Endothelial cell of umbilical vein (primary cell): ENCODE measurements at regions of chr11 and their contacts with region 1.

Region 1: DNA sequence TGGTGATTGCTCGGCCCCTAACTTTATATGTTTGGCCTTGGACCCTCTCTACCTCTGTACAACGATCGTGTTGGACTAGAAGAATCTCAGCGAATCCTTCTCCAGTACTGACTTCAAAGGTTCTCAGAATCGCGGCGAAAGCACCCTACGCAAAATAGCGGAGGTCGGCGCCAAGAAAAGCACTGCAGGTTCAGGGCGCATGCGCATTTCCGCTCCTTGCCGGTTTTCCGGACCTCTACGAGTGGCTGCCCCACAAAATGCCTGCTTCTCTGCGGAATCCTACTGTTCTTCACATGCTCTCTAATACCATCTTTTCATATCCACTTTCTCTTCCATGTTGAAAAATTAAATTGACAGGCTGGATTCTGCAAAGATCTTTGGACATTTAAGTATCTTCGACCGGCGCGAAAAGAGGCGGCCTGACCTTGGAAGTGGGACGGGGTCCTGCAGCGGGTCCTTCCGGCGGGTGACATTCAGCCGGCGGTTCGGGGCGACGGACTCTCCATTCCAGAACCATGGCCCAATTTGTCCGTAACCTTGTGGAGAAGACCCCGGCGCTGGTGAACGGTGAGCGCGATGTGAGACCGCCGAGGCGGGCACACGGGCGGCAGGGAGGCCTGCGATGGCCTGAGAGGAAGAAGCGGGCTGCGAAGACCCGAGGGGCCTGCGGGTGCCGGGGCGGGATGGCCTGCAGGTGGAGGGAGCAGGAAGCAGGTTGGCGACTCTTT is at the start of gene ATP5MG:
- DNase-seq: peak; percentile 97
- H3K4me3 ChIP-seq: peak within 1 kb of the TSS; percentile 71 to 99 (median 94)
- H3K27ac ChIP-seq: peak within 1 kb of the TSS; percentile 63
- H3K4me1 ChIP-seq: peaks cover 10% of the 10 kb centered on the region
- H3K27me3 ChIP-seq: no peaks in the 10 kb centered on the region
- CTCF ChIP-seq: peak in 1 of 2 donors; percentile 15
- POLR2A ChIP-seq: peak; percentile 69
- total RNA-seq, gene ATP5MG: 211 and 242 TPM in 2 replicates

Region 2: DNA sequence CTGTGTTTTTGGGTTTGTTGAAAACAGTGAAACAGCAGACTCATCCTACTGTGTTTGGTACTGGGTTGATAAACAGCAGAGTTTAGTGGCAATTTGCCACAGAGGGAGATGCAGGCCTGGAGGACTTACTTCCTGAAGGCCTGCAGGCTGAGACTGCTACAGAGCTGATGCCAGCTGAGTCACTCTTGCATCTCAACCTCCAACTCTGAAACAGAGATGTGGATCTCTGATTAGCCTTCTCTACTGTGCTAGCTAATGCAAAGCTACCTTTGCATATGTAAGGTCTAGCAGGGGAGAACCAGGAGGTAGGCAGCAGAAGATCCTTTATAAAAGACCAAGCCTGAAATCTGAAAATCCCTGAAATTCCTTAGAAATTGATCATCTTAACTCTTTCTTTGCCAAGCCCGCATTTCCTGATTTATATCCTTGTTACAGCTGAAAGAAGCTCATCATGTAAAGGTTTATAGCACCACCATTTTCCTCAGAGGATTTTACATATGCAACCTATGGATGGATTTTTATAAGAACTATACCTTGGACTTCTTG is 14.5 kb after region 1 on chr11:
- CTCF ChIA-PET with region 1: interaction called, 10 read pairs
- POLR2A ChIA-PET with region 1: interaction called, 3 read pairs
- dilution Hi-C with region 1: no loop called
- intact Hi-C with region 1: no loop called
- DNase-seq: peak; percentile 82
- H3K4me3 ChIP-seq: no peak overlapping the region
- H3K27ac ChIP-seq: no peak overlapping the region
- H3K4me1 ChIP-seq: peaks cover 13% of the 10 kb centered on the region
- H3K27me3 ChIP-seq: no peaks in the 10 kb centered on the region
- CTCF ChIP-seq: no peak
- POLR2A ChIP-seq: no peak

Region 3: DNA sequence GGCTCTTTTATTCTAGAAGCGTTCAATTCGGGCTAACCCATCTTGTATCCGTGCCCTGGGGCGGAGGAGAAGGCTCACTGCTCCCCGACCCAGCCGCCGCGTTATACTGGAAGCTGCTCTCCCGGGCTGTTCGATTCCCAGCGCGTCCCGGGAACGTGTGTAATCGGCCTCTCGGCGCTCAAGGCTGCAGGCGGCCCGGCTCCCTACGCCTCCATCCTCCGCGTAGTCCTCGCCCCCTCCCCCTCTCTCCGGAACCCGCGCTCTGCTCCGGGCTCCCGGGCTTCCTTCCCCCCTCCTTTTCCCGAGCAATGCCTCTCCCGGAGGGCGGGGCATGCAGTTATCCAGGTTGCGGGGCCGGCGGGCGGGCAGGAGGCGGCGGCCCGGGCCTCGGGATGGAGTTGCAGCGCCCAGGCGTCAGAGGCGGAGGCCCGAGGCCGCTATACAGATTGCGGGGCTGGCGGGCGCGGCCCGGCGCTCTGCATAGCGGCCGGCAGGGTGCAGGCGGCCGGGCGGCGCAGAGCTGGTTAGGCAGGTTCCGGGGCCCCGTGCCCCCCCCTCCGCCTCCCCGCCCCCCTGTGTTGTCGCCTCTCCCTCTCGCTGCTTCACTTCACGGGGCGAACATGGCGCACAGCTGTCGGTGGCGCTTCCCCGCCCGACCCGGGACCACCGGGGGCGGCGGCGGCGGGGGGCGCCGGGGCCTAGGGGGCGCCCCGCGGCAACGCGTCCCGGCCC is 34.7 kb after region 1 on chr11 and contains the start of gene KMT2A:
- CTCF ChIA-PET with region 1: interaction called, 9 read pairs
- POLR2A ChIA-PET with region 1: interaction called, 3 read pairs
- dilution Hi-C with region 1: no loop called
- intact Hi-C with region 1: loop called (anchors 1 kb)
- DNase-seq: peak; percentile 98
- H3K4me3 ChIP-seq: peak within 1 kb of the TSS; percentile 82 to 94 (median 90)
- H3K27ac ChIP-seq: peak within 1 kb of the TSS; percentile 45
- H3K4me1 ChIP-seq: peaks cover 29% of the 10 kb centered on the region
- H3K27me3 ChIP-seq: no peaks in the 10 kb centered on the region
- CTCF ChIP-seq: no peak
- POLR2A ChIP-seq: peak; percentile 81
- total RNA-seq, gene KMT2A: 63.9 and 64.1 TPM in 2 replicates

Region 4: DNA sequence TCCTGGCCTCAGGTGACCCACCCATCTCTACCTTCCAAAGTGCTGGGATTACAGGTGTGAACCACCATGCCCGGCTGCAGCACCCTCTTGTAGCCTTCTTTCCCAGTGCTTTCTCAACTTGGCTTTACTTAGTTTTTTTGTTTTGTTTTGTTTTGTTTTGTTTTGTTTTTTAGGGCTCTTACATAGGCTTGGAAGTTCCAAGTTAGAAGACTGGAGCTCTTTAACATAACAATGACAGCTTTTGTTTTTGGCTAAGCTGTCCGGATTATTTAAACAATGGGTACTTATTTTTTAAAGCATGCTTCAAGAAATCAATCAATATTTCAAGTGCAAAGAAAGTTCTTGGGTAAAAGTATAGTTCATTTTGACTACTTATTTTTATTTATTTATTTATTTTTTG is 60.9 kb after region 1 on chr11:
- CTCF ChIA-PET with region 1: no interaction called
- POLR2A ChIA-PET with region 1: no interaction called
- dilution Hi-C with region 1: no loop called
- intact Hi-C with region 1: no loop called
- DNase-seq: no peak
- H3K4me3 ChIP-seq: no peak overlapping the region
- H3K27ac ChIP-seq: no peak overlapping the region
- H3K4me1 ChIP-seq: no peaks in the 10 kb centered on the region
- H3K27me3 ChIP-seq: no peaks in the 10 kb centered on the region
- CTCF ChIP-seq: no peak
- POLR2A ChIP-seq: no peak

Region 5: DNA sequence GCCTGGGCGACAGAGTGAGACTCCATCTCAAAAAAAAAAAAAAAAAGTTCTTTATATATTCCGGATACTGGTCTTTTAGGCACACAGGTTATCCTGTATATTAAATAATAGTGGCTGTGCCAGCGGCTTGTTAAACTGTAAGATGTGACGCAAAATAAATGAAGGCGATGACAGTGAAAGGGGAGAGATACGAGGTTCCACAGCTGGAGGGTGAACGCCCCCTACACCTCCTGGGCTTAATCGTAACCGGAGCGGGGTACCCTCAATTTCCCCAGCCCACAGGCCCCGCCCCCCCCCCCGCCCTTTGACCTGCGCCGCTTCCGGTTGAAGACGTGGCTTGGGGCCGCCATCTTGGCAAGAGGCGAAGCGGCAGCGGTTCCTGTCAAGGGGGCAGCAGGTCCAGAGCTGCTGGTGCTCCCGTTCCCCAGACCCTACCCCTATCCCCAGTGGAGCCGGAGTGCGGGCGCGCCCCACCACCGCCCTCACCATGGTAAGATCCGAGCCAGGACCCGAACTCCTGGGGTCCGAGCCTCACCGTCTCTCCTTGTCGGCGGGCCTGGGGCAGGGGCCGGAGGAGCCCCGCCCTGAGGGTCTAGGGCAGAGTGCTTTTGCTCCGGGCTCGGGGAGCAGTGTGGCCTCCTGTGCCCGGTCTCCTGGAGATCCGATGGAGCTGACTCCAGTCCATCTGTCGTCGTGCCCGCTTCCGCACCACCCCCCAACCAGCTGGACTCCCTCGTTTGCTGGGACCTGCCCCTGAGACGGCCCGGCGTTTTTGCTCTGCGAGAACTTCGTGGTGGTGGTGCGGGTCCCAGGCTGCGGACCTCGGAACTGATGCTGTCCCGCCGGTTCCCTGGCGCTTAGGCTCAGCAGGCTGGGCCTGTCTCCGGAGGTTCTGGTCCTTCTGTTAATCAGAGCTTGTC is 171.0 kb after region 1 on chr11 and contains the start of gene ARCN1:
- CTCF ChIA-PET with region 1: no interaction called
- POLR2A ChIA-PET with region 1: no interaction called
- dilution Hi-C with region 1: no loop called
- intact Hi-C with region 1: loop called (anchors 2 kb)
- DNase-seq: peak; percentile 74
- H3K4me3 ChIP-seq: peak within 1 kb of the TSS; percentile 59 to 99 (median 90)
- H3K27ac ChIP-seq: peak within 1 kb of the TSS; percentile 87
- H3K4me1 ChIP-seq: peaks cover 19% of the 10 kb centered on the region
- H3K27me3 ChIP-seq: no peaks in the 10 kb centered on the region
- CTCF ChIP-seq: no peak
- POLR2A ChIP-seq: peak; percentile 92
- total RNA-seq, gene ARCN1: 168 and 172 TPM in 2 replicates